ENCODE measurements at regions of chr5 and their contacts with region 1.

Region 1: GRCh38 chr5:10595678-10596309 is 31.9 kb downstream of the ANKRD33B start:
- DNase-seq: peak in 1 of 9 donors; percentile 48
- ATAC-seq: peak; percentile 31
- H3K4me3 ChIP-seq: no peak overlapping the region
- H3K4me3 Mint-ChIP-seq: peak overlapping the region in 7 of 10 donors; percentile 5 to 59 (median 28)
- H3K27ac ChIP-seq: no peak overlapping the region
- H3K27ac Mint-ChIP-seq: peak overlapping the region in 1 of 9 donors; percentile 14
- H3K4me1 ChIP-seq: no peaks in the 10 kb centered on the region
- H3K4me1 Mint-ChIP-seq: peaks cover 4 to 59% (median 8%) of the 10 kb centered on the region in 7 donors
- H3K27me3 ChIP-seq: no peaks in the 10 kb centered on the region
- H3K27me3 Mint-ChIP-seq: peaks cover 0 to 8% (median 6%) of the 10 kb centered on the region in 5 donors

Region 2: DNA sequence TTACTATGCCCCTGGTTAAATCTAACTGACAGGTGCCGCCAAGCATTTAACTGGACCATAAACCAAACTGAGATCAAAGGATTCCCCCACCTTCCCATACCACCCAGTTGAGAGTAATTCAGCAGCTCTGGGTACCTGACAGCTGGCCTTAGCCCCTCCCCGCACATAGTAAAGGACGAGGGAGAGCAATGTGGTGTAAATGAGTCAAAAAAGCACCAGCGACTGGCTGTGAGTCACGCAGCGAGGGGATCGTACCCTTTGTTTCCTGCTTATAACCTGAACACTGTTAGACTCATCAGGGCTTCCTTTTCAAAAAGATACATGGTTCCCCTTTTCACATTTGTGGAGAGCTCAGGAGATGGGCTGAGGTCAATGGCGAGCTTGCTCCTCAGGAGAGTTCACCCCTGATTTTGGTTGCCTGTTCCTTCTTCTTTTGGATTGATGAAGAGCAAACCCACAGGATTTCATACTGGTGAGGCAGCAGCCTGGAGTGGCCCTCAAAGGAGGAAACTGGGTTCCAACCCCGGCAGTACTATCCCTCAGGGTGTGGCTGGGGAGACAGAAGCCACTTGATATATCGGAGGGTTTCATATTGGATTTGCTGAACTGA is 39.6 kb after region 1 on chr5:
- CTCF ChIA-PET with region 1: no interaction called
- POLR2A ChIA-PET with region 1: no interaction called
- intact Hi-C with region 1: loop called in 1 of 2 experiments (anchors 5 kb)
- DNase-seq: peak in 1 of 9 donors; percentile 70
- ATAC-seq: peak; percentile 76
- H3K4me3 ChIP-seq: no peak overlapping the region
- H3K4me3 Mint-ChIP-seq: peak overlapping the region in 6 of 10 donors; percentile 19 to 70 (median 39)
- H3K27ac ChIP-seq: no peak overlapping the region
- H3K27ac Mint-ChIP-seq: peak overlapping the region in 4 of 9 donors; percentile 51 to 91 (median 68)
- H3K4me1 ChIP-seq: peaks cover 6 to 26% of the 10 kb centered on the region in 2 donors
- H3K4me1 Mint-ChIP-seq: peaks cover 12 to 61% (median 30%) of the 10 kb centered on the region in 7 donors
- H3K27me3 ChIP-seq: no peaks in the 10 kb centered on the region
- H3K27me3 Mint-ChIP-seq: no peaks in the 10 kb centered on the region